ENCODE measurements at regions of chr7 and their contacts with region 1.

Region 1: GRCh38 chr7:92134271-92135051 is at the start of gene CYP51A1:
- DNase-seq: peak; percentile 99
- H3K4me3 Mint-ChIP-seq: peak within 1 kb of the TSS; percentile 95
- H3K27ac Mint-ChIP-seq: peak within 1 kb of the TSS; percentile 100
- H3K4me1 Mint-ChIP-seq: peaks cover 40% of the 10 kb centered on the region
- H3K27me3 Mint-ChIP-seq: no peaks in the 10 kb centered on the region
- total RNA-seq, gene CYP51A1: 103 and 106 TPM in 2 replicates

Region 2: GRCh38 chr7:91880413-91881241 is 253.8 kb before region 1 on chr7 and contains the start of gene MTERF1:
- intact Hi-C with region 1: loop called (anchors 2 kb)
- DNase-seq: peak; percentile 97
- H3K4me3 Mint-ChIP-seq: peak within 1 kb of the TSS; percentile 90
- H3K27ac Mint-ChIP-seq: peak within 1 kb of the TSS; percentile 90
- H3K4me1 Mint-ChIP-seq: peaks cover 27% of the 10 kb centered on the region
- H3K27me3 Mint-ChIP-seq: no peaks in the 10 kb centered on the region
- total RNA-seq, gene MTERF1: 19.5 and 20.9 TPM in 2 replicates

Region 3: DNA sequence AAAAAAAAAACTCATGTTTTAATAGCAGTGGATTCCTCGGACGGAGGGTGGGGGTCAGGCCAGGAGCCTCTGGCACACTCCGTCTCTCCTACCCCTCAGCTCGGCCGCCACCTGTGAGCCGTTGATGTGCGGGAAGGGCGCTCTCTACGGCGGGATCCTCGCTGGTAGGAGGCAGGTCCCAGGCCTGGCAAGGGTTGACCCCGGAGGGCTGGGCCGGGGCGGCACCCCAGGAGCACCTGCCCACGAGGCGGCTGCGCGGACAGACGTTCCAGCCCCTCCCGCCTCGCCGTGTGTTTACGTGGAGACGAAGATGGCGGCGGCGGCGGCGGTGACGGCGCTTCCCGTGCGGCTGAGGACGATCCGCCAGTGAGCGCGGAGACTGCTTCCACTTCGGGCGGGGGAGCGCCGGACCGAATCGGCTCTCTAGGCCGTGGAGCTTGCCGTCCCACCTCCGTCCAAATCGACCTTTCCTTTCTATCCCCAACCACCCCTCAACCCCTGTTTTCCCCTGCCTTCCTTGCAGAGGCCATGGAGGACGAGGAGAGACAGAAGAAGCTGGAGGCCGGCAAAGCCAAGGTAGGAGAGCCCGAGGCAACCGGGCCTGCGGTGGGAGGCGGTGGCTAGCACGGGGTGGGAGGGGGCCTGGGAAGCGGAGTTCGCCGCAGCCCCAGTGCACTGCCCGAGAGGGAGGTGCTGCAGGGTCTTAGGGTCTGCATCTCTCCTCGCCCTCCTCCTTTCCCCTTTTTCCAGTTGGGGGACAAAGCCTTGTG is 193.7 kb before region 1 on chr7 and contains the start of gene AKAP9:
- intact Hi-C with region 1: loop called (anchors 1 kb)
- DNase-seq: peak; percentile 97
- H3K4me3 Mint-ChIP-seq: peak within 1 kb of the TSS; percentile 89
- H3K27ac Mint-ChIP-seq: peak within 1 kb of the TSS; percentile 88
- H3K4me1 Mint-ChIP-seq: peaks cover 23% of the 10 kb centered on the region
- H3K27me3 Mint-ChIP-seq: peaks cover 8% of the 10 kb centered on the region
- total RNA-seq, gene AKAP9: 36.0 and 38.2 TPM in 2 replicates

Region 4: DNA sequence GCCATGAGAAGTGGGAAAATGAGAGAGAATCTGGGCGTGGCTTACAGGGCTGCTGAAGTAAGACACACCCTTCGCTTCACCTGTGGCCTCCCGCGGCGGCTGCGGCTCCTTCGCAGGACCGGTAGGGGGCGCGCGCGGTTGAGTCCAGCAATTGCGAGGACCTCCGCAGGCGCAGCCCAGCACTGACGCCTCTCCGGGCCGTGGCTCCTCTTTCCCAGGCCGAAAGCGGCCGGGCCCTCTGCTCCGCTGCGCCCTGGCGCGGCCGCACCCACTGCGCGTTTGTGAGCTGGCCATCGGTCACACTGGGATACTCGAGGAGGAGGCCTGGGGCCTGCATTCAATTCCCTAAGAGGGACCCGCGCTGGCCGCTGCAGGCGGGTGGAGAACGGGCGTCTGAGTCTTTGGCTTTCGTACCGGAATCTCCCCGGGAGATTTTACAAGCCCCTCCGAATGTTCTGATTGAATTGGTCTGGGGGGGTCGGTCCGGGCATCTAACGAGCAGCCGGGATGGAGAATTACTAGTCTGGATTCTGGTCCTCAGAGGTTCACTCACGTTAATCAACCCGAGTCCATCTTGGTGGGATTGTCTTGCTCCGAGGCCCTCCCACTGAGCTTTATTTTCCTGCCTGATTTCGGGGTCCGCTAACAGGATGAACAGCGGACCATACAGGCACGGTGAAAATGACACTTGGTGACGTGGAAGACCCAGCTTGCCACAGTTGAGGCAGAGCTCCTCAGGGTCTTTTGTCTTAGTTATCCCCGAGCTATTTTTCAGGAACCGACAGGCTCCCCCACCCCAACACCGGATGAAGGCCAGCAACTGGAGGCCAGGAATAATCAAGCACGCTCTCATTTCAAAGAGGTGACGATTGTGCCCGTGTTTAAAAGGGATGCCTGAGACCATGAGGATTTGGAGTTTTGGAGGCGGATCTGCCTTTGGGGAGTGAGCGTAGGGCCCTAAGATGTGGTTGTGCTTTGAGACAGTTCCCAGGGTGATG is 44.8 kb after region 1 on chr7 and contains the start of gene LRRD1:
- intact Hi-C with region 1: loop called (anchors 2 kb)
- DNase-seq: peak; percentile 97
- H3K4me3 Mint-ChIP-seq: peak within 1 kb of the TSS; percentile 76
- H3K27ac Mint-ChIP-seq: no peak within 1 kb of the TSS
- H3K4me1 Mint-ChIP-seq: peaks cover 1% of the 10 kb centered on the region
- H3K27me3 Mint-ChIP-seq: peaks cover 32% of the 10 kb centered on the region
- total RNA-seq, gene LRRD1: not detected in 2 replicates

Region 5: GRCh38 chr7:92292981-92293380 is 158.5 kb after region 1 on chr7:
- intact Hi-C with region 1: no loop called
- DNase-seq: no peak
- H3K4me3 Mint-ChIP-seq: no peak overlapping the region
- H3K27ac Mint-ChIP-seq: no peak overlapping the region
- H3K4me1 Mint-ChIP-seq: peaks cover 12% of the 10 kb centered on the region
- H3K27me3 Mint-ChIP-seq: no peaks in the 10 kb centered on the region

Region 6: GRCh38 chr7:93117852-93118530 is 983.5 kb after region 1 on chr7 and contains the start of gene SAMD9:
- intact Hi-C with region 1: loop called (anchors 5 kb)
- DNase-seq: peak; percentile 90
- H3K4me3 Mint-ChIP-seq: peak within 1 kb of the TSS; percentile 90
- H3K27ac Mint-ChIP-seq: peak within 1 kb of the TSS; percentile 90
- H3K4me1 Mint-ChIP-seq: peaks cover 54% of the 10 kb centered on the region
- H3K27me3 Mint-ChIP-seq: no peaks in the 10 kb centered on the region
- total RNA-seq, gene SAMD9: 8.6 and 9.4 TPM in 2 replicates